ENCODE measurements at regions of chrX and their contacts with region 1.

Region 1: DNA sequence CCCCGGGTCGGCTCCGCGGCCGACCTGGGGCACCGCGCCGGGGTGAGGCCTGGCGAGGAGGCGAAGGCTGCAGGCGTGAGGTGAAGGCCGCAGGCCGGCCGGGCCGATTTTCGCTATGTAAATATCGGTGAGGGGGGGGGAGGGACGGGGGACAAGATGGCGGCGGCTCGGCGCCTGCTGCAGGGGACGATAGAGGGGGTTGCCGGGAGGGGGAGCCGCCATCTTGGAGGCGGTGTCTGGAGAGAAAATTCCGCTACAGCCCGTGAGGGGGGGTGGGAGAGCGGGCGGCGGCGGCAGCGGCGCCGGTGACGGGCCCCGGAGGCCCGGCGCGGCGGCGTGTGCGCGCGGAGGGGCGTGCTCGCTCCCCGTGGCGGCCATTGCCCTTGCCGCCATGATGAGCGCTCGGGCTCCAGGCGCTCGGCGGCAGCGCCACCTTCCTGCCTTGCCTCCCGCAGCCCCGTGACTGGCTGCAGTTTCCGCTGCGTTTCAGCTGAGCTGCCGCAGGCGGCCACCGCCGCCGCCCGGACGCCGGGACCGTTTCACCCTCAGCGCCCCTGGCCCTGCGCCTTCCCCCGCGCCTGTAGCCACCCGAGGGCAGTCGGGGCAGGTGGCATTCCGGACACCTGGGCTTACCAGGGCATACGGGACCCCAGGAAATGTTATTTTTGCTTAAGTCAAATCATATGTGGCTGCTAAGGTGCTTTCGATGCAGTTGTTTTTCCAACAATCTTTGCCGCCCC is 692 bp downstream of the ZFX start:
- DNase-seq: peak; percentile 93
- H3K4me3 Mint-ChIP-seq: peak overlapping the region; percentile 88
- H3K27ac Mint-ChIP-seq: peak overlapping the region; percentile 89
- H3K4me1 Mint-ChIP-seq: peaks cover 32% of the 10 kb centered on the region
- H3K27me3 Mint-ChIP-seq: no peaks in the 10 kb centered on the region

Region 2: DNA sequence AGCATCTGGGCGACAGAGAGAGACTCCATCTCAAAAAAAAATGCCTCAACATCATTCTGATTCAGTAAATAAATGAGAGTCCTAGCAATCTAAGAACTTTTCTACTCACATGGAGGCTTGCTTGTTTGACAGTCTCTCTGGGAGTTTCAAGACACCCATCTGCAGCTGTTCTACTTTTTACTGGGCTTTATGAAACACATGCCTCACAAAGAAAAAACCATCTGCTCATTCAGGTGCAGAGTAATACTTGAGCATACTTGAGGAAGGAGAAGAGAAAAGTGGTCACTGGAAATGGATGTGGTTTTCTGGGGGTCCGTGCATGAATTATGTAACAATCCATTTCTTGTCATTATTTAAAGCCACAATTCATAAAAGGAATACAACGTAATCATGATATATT is 1237.6 kb before region 1 on chrX:
- intact Hi-C with region 1: no loop called
- DNase-seq: no peak
- H3K4me3 Mint-ChIP-seq: no peak overlapping the region
- H3K27ac Mint-ChIP-seq: no peak overlapping the region
- H3K4me1 Mint-ChIP-seq: no peaks in the 10 kb centered on the region
- H3K27me3 Mint-ChIP-seq: no peaks in the 10 kb centered on the region

Region 3: GRCh38 chrX:23782863-23783568 is 367.2 kb before region 1 on chrX and contains the start of gene SAT1:
- intact Hi-C with region 1: loop called (anchors 5 kb)
- DNase-seq: peak; percentile 98
- H3K4me3 Mint-ChIP-seq: peak within 1 kb of the TSS; percentile 95
- H3K27ac Mint-ChIP-seq: peak within 1 kb of the TSS; percentile 95
- H3K4me1 Mint-ChIP-seq: peaks cover 25% of the 10 kb centered on the region
- H3K27me3 Mint-ChIP-seq: no peaks in the 10 kb centered on the region
- total RNA-seq, gene SAT1: 58.3 and 59.9 TPM in 2 replicates

Region 4: GRCh38 chrX:24054182-24055042 is 95.8 kb before region 1 on chrX and contains the start of gene EIF2S3:
- intact Hi-C with region 1: loop called (anchors 1 kb)
- DNase-seq: peak; percentile 95
- H3K4me3 Mint-ChIP-seq: no peak within 1 kb of the TSS
- H3K27ac Mint-ChIP-seq: peak within 1 kb of the TSS; percentile 100
- H3K4me1 Mint-ChIP-seq: peaks cover 6% of the 10 kb centered on the region
- H3K27me3 Mint-ChIP-seq: no peaks in the 10 kb centered on the region
- total RNA-seq, gene EIF2S3: 207 and 214 TPM in 2 replicates

Region 5: GRCh38 chrX:24169211-24169610 is 19.0 kb after region 1 on chrX:
- intact Hi-C with region 1: loop called (anchors 2 kb)
- DNase-seq: no peak
- H3K4me3 Mint-ChIP-seq: peak overlapping the region; percentile 72
- H3K27ac Mint-ChIP-seq: peak overlapping the region; percentile 92
- H3K4me1 Mint-ChIP-seq: peaks cover 37% of the 10 kb centered on the region
- H3K27me3 Mint-ChIP-seq: no peaks in the 10 kb centered on the region

Region 6: GRCh38 chrX:24231131-24231540 is 80.9 kb after region 1 on chrX:
- intact Hi-C with region 1: loop called (anchors 10 kb)
- DNase-seq: no peak
- H3K4me3 Mint-ChIP-seq: no peak overlapping the region
- H3K27ac Mint-ChIP-seq: no peak overlapping the region
- H3K4me1 Mint-ChIP-seq: peaks cover 5% of the 10 kb centered on the region
- H3K27me3 Mint-ChIP-seq: peaks cover 4% of the 10 kb centered on the region

Measured in activated CD4-positive, alpha-beta T cell treated with anti-CD3 and anti-CD28 coated beads, Interleukin-2, amount 10 ng/mL, durations not matched to agents 24 days and 14 days (primary cell).